ENCODE measurements at regions of chr2 and their contacts with region 1.

Region 1: DNA sequence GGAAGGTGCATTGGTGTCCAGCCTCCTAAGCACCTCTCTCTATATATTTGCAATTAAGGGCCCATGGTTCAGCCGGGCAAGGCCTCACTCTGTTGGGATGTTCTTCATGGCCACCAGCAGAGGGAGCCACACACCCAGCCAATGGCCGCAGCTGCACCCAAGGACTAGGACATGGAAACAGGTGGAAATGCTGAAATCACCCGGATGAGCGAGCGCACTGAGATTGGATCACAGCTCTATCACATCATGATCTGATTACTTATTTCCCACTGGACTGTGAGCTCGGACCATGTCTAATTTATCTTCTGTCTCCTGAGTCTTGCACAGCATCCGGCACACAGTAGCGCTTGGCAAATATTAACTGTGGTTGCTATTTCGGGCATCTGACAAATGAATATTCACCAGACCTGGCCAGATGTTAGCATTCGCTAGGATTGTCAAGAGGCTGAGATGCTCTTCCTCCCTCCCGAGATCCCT is 31.2 kb downstream of the KIF3C start:
- DNase-seq: peak; percentile 65 to 81 (median 66)
- H3K4me3 ChIP-seq: no peak overlapping the region
- H3K4me3 Mint-ChIP-seq: no peak overlapping the region
- H3K27ac ChIP-seq: no peak overlapping the region
- H3K27ac Mint-ChIP-seq: peak overlapping the region in 1 of 7 donors; percentile 31
- H3K4me1 ChIP-seq: no peaks in the 10 kb centered on the region
- H3K4me1 Mint-ChIP-seq: peaks cover 4% of the 10 kb centered on the region
- H3K27me3 ChIP-seq: no peaks in the 10 kb centered on the region
- H3K27me3 Mint-ChIP-seq: peaks cover 0 to 5% (median 0%) of the 10 kb centered on the region in 3 donors
- CTCF ChIP-seq: peak; percentile 98

Region 2: DNA sequence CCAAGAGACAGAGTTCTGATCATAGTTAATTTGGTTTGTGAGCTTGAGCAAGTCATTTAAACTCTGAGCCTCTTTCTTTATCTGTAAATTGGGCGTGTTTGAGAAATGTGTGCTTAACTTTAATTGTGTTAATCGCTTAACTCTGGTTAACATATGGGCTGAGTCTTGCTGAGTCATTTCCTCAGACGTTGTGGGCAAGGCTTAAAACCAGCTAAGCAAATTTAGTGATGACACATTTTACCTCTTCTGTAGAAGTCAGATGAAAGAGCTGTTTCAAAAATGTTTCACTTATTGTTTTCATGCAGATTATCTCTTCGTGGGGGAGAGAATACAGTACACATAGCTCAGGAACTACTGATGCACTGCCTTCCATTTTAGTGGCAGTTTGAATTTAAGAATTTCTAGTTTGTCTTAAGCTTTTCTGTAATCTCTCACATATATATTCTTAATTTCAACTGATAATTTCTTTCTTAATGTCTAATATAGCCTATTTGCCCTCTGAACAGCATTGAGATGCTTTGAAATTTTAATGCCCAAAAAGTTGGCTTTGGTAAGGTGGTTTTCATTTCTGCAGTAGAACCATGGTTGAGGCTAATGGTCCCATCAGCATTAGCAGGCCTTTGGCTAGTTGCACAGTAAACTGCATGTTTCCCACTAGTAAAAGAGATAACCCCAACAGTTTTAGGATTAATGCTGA is 117.6 kb after region 1 on chr2:
- intact Hi-C with region 1: no loop called
- DNase-seq: peak; percentile 59 to 81 (median 80)
- H3K4me3 ChIP-seq: peak overlapping the region in 1 of 3 experiments; percentile 46
- H3K4me3 Mint-ChIP-seq: peak overlapping the region in 1 of 2 donors; percentile 11
- H3K27ac ChIP-seq: peak overlapping the region in 1 of 2 donors; percentile 68
- H3K27ac Mint-ChIP-seq: peak overlapping the region; percentile 78 to 92 (median 86)
- H3K4me1 ChIP-seq: peaks cover 61 to 79% of the 10 kb centered on the region in 2 donors
- H3K4me1 Mint-ChIP-seq: peaks cover 67% of the 10 kb centered on the region
- H3K27me3 ChIP-seq: no peaks in the 10 kb centered on the region
- H3K27me3 Mint-ChIP-seq: no peaks in the 10 kb centered on the region
- CTCF ChIP-seq: no peak

Region 3: GRCh38 chr2:26144953-26145680 is 194.0 kb after region 1 on chr2:
- intact Hi-C with region 1: loop called (anchors 2 kb)
- DNase-seq: peak; percentile 43 to 64 (median 58)
- H3K4me3 ChIP-seq: no peak overlapping the region
- H3K4me3 Mint-ChIP-seq: peak overlapping the region in 1 of 2 donors; percentile 39
- H3K27ac ChIP-seq: no peak overlapping the region
- H3K27ac Mint-ChIP-seq: peak overlapping the region in 1 of 7 donors; percentile 37
- H3K4me1 ChIP-seq: peaks cover 12 to 16% of the 10 kb centered on the region in 2 donors
- H3K4me1 Mint-ChIP-seq: peaks cover 19% of the 10 kb centered on the region
- H3K27me3 ChIP-seq: no peaks in the 10 kb centered on the region
- H3K27me3 Mint-ChIP-seq: peaks cover 6 to 12% (median 8%) of the 10 kb centered on the region in 3 donors
- CTCF ChIP-seq: peak; percentile 83

Region 4: GRCh38 chr2:26184555-26185303 is 233.6 kb after region 1 on chr2:
- intact Hi-C with region 1: loop called in 1 of 2 experiments (anchors 10 kb)
- DNase-seq: peak; percentile 85 to 87 (median 86)
- H3K4me3 ChIP-seq: peak overlapping the region; percentile 40 to 74 (median 46)
- H3K4me3 Mint-ChIP-seq: peak overlapping the region; percentile 73 to 84
- H3K27ac ChIP-seq: no peak overlapping the region
- H3K27ac Mint-ChIP-seq: peak overlapping the region in 1 of 7 donors; percentile 15
- H3K4me1 ChIP-seq: peaks cover 9 to 21% of the 10 kb centered on the region in 2 donors
- H3K4me1 Mint-ChIP-seq: peaks cover 19% of the 10 kb centered on the region
- H3K27me3 ChIP-seq: peaks cover 4 to 20% of the 10 kb centered on the region in 2 donors
- H3K27me3 Mint-ChIP-seq: peaks cover 18 to 37% (median 32%) of the 10 kb centered on the region in 3 donors
- CTCF ChIP-seq: peak; percentile 63

Region 5: DNA sequence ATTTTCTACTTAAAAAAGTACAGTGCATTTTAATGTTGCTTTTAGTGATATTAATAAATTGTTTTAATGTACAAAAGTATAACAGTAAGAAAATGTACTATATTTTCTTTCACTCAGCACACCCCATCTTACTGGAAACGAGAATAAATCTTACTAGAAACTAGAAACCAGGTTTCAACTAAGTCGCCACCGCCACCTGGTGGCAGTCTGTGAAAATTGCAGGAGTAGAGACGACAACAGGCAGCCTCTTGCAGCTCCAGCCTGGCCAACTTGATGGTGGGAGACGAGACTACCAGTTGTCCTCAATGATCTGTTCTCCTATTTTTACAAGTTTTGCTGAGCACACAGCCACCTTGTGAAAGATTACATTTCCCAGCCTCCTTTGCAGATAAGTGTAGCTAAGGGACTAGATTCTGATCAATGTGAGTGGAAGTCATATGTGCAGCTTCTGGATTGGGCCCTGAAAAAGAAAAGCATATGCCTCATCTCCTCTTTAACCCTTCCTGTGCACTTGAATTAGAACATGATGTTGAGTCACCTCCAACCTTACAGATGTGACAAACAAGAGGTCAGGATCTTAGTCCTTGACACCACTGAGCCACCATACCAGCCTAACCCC is 518.1 kb after region 1 on chr2:
- intact Hi-C with region 1: loop called in 1 of 2 experiments (anchors 2 kb)
- DNase-seq: peak; percentile 60 to 81 (median 67)
- H3K4me3 ChIP-seq: no peak overlapping the region
- H3K4me3 Mint-ChIP-seq: no peak overlapping the region
- H3K27ac ChIP-seq: no peak overlapping the region
- H3K27ac Mint-ChIP-seq: peak overlapping the region in 1 of 7 donors; percentile 18
- H3K4me1 ChIP-seq: no peaks in the 10 kb centered on the region
- H3K4me1 Mint-ChIP-seq: no peaks in the 10 kb centered on the region
- H3K27me3 ChIP-seq: no peaks in the 10 kb centered on the region
- H3K27me3 Mint-ChIP-seq: peaks cover 0 to 4% (median 1%) of the 10 kb centered on the region in 3 donors
- CTCF ChIP-seq: peak; percentile 96